ENCODE measurements at regions of chr10 and their contacts with region 1.

Region 1: GRCh38 chr10:74293686-74294371 is 142.8 kb downstream of the ADK start:
- DNase-seq: peak; percentile 100
- ATAC-seq: peak; percentile 80
- H3K4me3 ChIP-seq: peak overlapping the region; percentile 27
- H3K27ac ChIP-seq: peak overlapping the region; percentile 66
- H3K4me1 ChIP-seq: peaks cover 46% of the 10 kb centered on the region
- H3K27me3 ChIP-seq: no peaks in the 10 kb centered on the region
- CTCF ChIP-seq: no peak

Region 2: DNA sequence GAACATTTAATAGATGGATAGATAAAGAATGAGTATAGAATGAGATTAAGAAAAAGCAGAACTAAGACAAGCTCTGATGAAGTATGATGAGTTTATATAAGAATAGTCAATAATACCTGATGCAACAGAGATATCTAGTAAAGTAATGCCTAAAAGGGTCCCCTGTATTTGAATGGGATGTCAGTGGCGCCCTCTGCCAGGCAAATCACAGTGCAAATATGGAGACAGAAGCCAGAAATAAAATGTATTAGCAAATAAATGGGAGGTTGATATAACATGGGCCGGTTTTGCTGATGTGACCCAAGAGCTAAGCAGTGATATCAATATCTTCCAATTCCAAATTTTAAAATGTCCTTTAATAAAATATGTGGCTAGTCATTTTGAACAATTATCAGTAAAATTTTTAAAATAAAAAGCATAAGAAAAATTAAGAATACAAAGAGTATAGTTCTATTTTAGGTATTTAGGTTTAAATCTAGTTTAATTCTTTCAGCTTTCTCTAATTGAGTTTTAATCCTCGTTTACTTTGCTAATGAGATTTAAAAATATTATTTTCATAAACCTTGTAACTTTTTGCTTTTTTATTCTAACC is 80.2 kb before region 1 on chr10:
- CTCF ChIA-PET with region 1: no interaction called
- POLR2A ChIA-PET with region 1: no interaction called
- intact Hi-C with region 1: no loop called
- DNase-seq: peak; percentile 95
- ATAC-seq: peak; percentile 91
- H3K4me3 ChIP-seq: no peak overlapping the region
- H3K27ac ChIP-seq: no peak overlapping the region
- H3K4me1 ChIP-seq: no peaks in the 10 kb centered on the region
- H3K27me3 ChIP-seq: no peaks in the 10 kb centered on the region
- CTCF ChIP-seq: peak; percentile 100; the same call in 1 of the 2 replicates

Region 3: DNA sequence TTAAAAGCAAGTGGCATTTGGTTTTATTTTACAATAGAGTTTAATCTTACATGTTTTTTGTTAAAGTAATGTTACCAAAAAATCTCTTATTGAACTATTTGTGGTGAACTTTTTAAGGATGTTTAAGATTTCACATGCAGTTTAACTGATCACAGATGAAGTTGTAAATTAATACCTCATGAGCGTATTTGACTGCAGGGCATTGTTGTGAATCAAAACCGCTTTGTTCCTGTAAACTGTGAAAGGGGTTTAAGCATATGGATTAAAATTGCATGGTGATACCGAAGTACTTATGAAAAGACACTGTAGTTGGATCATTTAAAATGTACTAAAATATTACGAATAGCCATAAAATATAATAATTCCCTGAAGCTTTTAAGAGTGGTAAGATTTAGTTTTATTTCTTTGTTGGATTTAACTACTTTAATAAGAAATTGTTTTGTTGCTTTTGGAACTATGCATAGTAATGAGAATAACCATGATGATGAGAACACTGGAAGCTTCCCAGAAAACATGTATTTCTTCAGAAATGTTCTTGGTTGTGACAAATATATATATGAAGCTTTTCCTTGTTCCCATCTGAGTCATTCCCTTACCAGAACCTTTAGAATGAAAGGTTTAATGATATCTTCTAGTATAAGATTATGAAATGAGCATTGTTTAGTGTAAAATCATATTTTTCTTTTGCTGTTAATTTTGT is 11.5 kb before region 1 on chr10:
- CTCF ChIA-PET with region 1: no interaction called
- POLR2A ChIA-PET with region 1: interaction called, 14 read pairs
- intact Hi-C with region 1: no loop called
- DNase-seq: peak; percentile 89
- ATAC-seq: peak; percentile 60
- H3K4me3 ChIP-seq: no peak overlapping the region
- H3K27ac ChIP-seq: peak overlapping the region; percentile 73
- H3K4me1 ChIP-seq: peaks cover 40% of the 10 kb centered on the region
- H3K27me3 ChIP-seq: no peaks in the 10 kb centered on the region
- CTCF ChIP-seq: no peak

Region 4: DNA sequence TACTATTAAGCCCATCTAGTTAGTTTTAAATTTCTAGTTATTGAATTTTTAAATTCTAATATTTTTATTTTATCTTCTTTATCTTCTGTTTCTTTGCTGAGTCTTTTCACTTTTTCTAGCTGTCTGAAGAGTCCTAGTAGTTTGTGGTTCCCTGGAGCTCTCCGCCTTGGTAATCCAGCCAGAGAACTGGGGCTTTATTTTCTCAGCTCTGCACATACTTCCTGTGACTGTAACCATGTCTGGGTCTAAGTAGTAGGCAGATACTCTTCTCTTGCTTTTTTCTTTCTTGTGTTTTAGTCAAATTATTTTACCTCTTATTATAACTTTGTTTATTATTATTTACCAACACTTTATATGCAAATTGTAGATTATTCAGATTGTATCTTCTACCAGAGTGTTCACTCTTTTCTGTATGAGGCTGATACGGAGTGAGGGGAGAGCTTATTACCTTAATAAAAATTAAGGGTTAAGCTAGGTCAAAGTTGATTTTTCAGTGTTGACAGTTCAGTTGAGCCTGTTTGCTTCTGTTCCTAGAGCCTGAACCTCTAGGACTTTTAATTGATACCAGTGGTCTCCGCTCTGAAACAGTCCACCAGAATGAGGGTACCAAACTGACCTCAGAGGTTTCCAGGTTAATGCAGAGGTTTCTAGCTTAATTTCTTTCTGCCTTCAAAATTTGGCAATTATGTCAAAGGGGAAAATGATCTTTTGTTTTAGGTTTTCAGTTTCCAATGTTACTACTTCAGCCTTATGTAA is 12.6 kb after region 1 on chr10:
- CTCF ChIA-PET with region 1: no interaction called
- POLR2A ChIA-PET with region 1: interaction called, 14 read pairs
- intact Hi-C with region 1: no loop called
- DNase-seq: no peak
- ATAC-seq: no peak; the same call in 1 of the 2 replicates
- H3K4me3 ChIP-seq: no peak overlapping the region
- H3K27ac ChIP-seq: no peak overlapping the region
- H3K4me1 ChIP-seq: peaks cover 9% of the 10 kb centered on the region
- H3K27me3 ChIP-seq: no peaks in the 10 kb centered on the region
- CTCF ChIP-seq: no peak

Region 5: GRCh38 chr10:74337330-74338016 is 43.6 kb after region 1 on chr10:
- CTCF ChIA-PET with region 1: interaction called, 10 read pairs
- POLR2A ChIA-PET with region 1: no interaction called
- intact Hi-C with region 1: no loop called
- DNase-seq: peak; percentile 56
- ATAC-seq: peak; percentile 78
- H3K4me3 ChIP-seq: no peak overlapping the region
- H3K27ac ChIP-seq: no peak overlapping the region
- H3K4me1 ChIP-seq: peaks cover 8% of the 10 kb centered on the region; the same call in 1 of the 2 replicates
- H3K27me3 ChIP-seq: no peaks in the 10 kb centered on the region
- CTCF ChIP-seq: no peak

Region 6: GRCh38 chr10:74483356-74483755 is 189.5 kb after region 1 on chr10:
- CTCF ChIA-PET with region 1: interaction called, 14 read pairs
- POLR2A ChIA-PET with region 1: no interaction called
- intact Hi-C with region 1: no loop called
- DNase-seq: no peak
- ATAC-seq: no peak
- H3K4me3 ChIP-seq: no peak overlapping the region
- H3K27ac ChIP-seq: no peak overlapping the region
- H3K4me1 ChIP-seq: no peaks in the 10 kb centered on the region
- H3K27me3 ChIP-seq: no peaks in the 10 kb centered on the region
- CTCF ChIP-seq: no peak

Region 7: GRCh38 chr10:75210282-75211006 is 916.6 kb after region 1 on chr10 and contains the start of gene VDAC2:
- CTCF ChIA-PET with region 1: no interaction called
- POLR2A ChIA-PET with region 1: interaction called, 18 read pairs
- intact Hi-C with region 1: no loop called
- DNase-seq: peak; percentile 99
- ATAC-seq: peak; percentile 88
- H3K4me3 ChIP-seq: peak within 1 kb of the TSS; percentile 72
- H3K27ac ChIP-seq: peak within 1 kb of the TSS; percentile 85
- H3K4me1 ChIP-seq: peaks cover 45% of the 10 kb centered on the region
- H3K27me3 ChIP-seq: no peaks in the 10 kb centered on the region
- CTCF ChIP-seq: no peak
- total RNA-seq, gene VDAC2: 463 and 542 TPM in 2 replicates